Heart left ventricle (tissue), 16 donors: ENCODE measurements at regions of chr7 and their contacts with region 1.

Region 1: GRCh38 chr7:83015916-83016315 is 146.8 kb downstream of the PCLO start:
- DNase-seq: no peak
- ATAC-seq: no peak
- H3K4me3 ChIP-seq: no peak overlapping the region
- H3K27ac ChIP-seq: no peak overlapping the region
- H3K4me1 ChIP-seq: no peaks in the 10 kb centered on the region
- H3K27me3 ChIP-seq: no peaks in the 10 kb centered on the region
- CTCF ChIP-seq: no peak
- POLR2A ChIP-seq: no peak

Region 2: DNA sequence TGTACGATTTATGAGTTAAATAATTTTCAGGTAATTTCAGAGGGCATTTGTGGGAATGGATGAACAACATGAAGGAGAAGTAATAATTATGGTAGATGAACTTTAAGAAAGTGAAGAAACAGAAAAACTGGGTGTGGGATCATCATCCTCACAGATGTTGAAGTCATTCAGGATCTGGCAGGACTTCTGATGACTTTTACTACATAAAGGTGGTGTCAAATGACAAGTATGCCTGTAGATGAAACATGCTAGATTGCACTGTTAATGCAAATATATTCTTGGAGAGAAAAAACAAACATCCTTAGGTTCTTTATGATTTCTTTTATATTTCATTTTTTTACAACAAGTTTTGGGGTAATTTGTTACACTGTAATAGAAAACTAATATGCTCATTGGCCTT is 83.4 kb before region 1 on chr7:
- intact Hi-C with region 1: no loop called
- DNase-seq: no peak
- ATAC-seq: no peak
- H3K4me3 ChIP-seq: no peak overlapping the region
- H3K27ac ChIP-seq: no peak overlapping the region
- H3K4me1 ChIP-seq: no peaks in the 10 kb centered on the region
- H3K27me3 ChIP-seq: no peaks in the 10 kb centered on the region
- CTCF ChIP-seq: no peak
- POLR2A ChIP-seq: no peak

Region 3: DNA sequence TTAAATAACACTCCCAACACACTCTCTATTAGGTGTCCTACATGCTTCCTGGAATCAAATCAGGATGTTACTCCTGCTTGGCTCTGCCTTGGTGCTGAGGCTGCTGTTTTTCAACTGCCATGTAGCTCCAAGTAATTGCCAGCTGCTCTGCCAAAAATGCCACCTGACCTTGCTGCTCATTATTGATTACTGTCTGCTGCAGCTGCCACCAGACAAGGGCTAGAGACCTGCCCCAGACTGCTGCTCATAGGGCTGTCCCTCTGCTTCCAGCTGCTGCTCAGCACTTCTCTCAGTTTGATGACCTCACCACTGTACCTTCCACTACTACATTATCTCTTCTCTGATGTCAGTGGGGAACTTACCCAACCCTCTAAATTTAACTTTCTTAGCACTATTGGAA is 44.3 kb after region 1 on chr7:
- intact Hi-C with region 1: loop called in 1 of 10 experiments (anchors 10 kb)
- DNase-seq: peak; percentile 7 to 37 (median 21)
- ATAC-seq: peak; percentile 90 to 98 (median 94)
- H3K4me3 ChIP-seq: no peak overlapping the region
- H3K27ac ChIP-seq: no peak overlapping the region
- H3K4me1 ChIP-seq: peaks cover 0 to 10% (median 0%) of the 10 kb centered on the region in 12 donors
- H3K27me3 ChIP-seq: no peaks in the 10 kb centered on the region
- CTCF ChIP-seq: no peak
- POLR2A ChIP-seq: no peak